PC-9 (cell line): ENCODE measurements at regions of chr5 and their contacts with region 1.

Region 1: GRCh38 chr5:39100851-39101396 is 26.7 kb upstream of the RICTOR start:
- DNase-seq: peak; percentile 96 to 100
- H3K4me3 ChIP-seq: peak overlapping the region; percentile 41; the same call in 1 of the 2 replicates
- H3K27ac ChIP-seq: peak overlapping the region; percentile 98
- H3K4me1 ChIP-seq: peaks cover 60% of the 10 kb centered on the region
- H3K27me3 ChIP-seq: no peaks in the 10 kb centered on the region
- CTCF ChIP-seq: no peak

Region 2: DNA sequence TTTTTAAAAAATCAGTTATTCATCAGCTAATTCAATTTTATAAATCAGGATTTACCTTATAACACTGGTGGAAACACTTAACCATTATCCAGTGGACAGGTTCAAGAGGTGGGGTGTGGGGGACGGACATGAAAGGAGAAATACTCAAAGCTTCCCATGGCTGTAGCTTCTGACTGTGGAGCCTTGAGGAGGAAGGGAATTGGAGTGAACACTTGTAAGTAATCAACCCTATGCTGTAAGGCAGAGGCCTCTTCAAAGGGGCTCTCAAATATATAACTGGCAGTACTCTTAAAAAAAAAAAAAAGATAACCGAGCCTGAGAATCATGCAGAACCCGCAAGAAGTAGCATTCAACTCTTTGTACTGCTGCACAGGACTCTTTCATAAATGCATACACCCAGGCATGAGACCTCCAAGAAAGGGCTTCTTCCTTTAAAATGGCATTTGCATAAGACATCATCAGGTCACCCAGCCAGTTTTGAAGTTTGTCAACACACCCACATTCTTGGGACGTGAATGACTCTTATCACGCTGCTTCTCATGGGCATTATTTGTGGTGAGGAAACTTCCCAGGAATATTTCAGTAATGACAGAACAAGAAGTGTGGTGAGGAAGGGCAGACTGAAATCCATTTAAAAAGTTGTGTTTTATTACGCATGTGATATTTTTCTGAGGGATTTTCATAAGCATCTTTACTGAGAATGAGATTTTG is 247.0 kb before region 1 on chr5:
- CTCF ChIA-PET with region 1: no interaction called
- POLR2A ChIA-PET with region 1: no interaction called
- intact Hi-C with region 1: loop called (anchors 2 kb)
- DNase-seq: peak; percentile 84 to 100
- H3K4me3 ChIP-seq: peak overlapping the region; percentile 17; the same call in 1 of the 2 replicates
- H3K27ac ChIP-seq: peak overlapping the region; percentile 95
- H3K4me1 ChIP-seq: peaks cover 40% of the 10 kb centered on the region
- H3K27me3 ChIP-seq: no peaks in the 10 kb centered on the region
- CTCF ChIP-seq: no peak

Region 3: DNA sequence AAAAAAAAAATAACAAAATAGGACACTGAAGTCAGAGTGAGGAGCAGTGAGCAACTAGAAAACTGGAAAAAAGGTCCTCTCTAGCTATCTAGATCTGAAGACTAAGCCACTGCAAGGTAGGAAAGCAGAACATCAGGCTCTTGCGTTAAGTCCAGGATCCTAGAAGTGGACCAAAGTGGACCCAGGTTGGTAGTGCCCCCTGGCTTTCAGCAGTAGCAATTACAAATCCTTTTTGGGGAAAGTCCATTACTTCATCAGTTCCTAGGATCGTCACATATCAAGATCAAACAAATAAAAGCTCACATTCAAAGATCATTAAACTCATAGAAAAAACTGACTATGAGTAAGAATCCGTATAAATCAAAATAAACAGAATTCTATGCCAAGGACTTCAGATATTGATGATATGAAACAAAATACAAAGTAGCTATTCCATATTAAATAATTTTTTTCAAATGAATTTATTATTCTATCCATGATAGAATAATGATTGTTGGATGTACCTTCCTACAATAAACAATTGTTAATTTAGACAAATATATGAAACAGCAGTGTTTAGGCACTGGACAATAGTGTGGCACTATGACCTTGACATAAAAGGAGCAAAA is 20.2 kb before region 1 on chr5:
- CTCF ChIA-PET with region 1: interaction called, 18 read pairs
- POLR2A ChIA-PET with region 1: no interaction called
- intact Hi-C with region 1: loop called (anchors 1 kb)
- DNase-seq: no peak
- H3K4me3 ChIP-seq: no peak overlapping the region
- H3K27ac ChIP-seq: no peak overlapping the region
- H3K4me1 ChIP-seq: peaks cover 21% of the 10 kb centered on the region
- H3K27me3 ChIP-seq: no peaks in the 10 kb centered on the region
- CTCF ChIP-seq: peak; percentile 76

Region 4: DNA sequence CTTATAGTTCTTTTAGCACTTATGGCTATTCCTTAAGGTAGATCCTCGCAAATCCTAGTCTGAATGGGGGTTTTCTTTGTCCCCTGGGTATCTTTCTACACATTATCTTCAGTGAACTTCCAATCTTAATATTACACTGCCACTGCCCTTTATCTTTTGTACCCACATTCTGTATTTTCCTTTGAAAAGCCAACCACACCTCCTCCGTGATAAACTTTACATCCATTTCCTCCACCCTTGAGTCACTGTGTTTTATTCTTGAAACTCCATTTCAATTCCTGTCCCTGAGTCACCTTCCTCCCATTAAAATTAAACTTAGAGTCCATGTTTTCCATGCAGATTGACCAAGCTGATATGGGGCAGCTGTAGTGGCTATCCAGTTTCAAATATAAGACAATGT is 16.5 kb after region 1 on chr5:
- CTCF ChIA-PET with region 1: no interaction called
- POLR2A ChIA-PET with region 1: no interaction called
- intact Hi-C with region 1: no loop called
- DNase-seq: no peak
- H3K4me3 ChIP-seq: no peak overlapping the region
- H3K27ac ChIP-seq: no peak overlapping the region
- H3K4me1 ChIP-seq: 0 out of 2 replicates have a peak, but pooled peaks cover 16% of the 10 kb centered on the region
- H3K27me3 ChIP-seq: no peaks in the 10 kb centered on the region
- CTCF ChIP-seq: no peak

Region 5: GRCh38 chr5:39138892-39139291 is 38.0 kb after region 1 on chr5:
- CTCF ChIA-PET with region 1: no interaction called
- POLR2A ChIA-PET with region 1: no interaction called
- intact Hi-C with region 1: loop called (anchors 1 kb)
- DNase-seq: peak in 1 of 2 experiments; percentile 98
- H3K4me3 ChIP-seq: 0 out of 2 replicates have a peak overlapping the region, but pooled peaks have one; percentile 9
- H3K27ac ChIP-seq: peak overlapping the region; percentile 89
- H3K4me1 ChIP-seq: peaks cover 21% of the 10 kb centered on the region
- H3K27me3 ChIP-seq: no peaks in the 10 kb centered on the region
- CTCF ChIP-seq: no peak

Region 6: GRCh38 chr5:39194466-39195136 is 93.7 kb after region 1 on chr5:
- CTCF ChIA-PET with region 1: no interaction called
- POLR2A ChIA-PET with region 1: interaction called, 3 read pairs
- intact Hi-C with region 1: loop called (anchors 2 kb)
- DNase-seq: peak; percentile 78 to 93
- H3K4me3 ChIP-seq: peak overlapping the region; percentile 13; the same call in 1 of the 2 replicates
- H3K27ac ChIP-seq: peak overlapping the region; percentile 91
- H3K4me1 ChIP-seq: peaks cover 56% of the 10 kb centered on the region
- H3K27me3 ChIP-seq: no peaks in the 10 kb centered on the region
- CTCF ChIP-seq: no peak

Region 7: GRCh38 chr5:39376293-39376714 is 275.4 kb after region 1 on chr5:
- CTCF ChIA-PET with region 1: interaction called, 22 read pairs
- POLR2A ChIA-PET with region 1: no interaction called
- intact Hi-C with region 1: no loop called
- DNase-seq: peak; percentile 63 to 66
- H3K4me3 ChIP-seq: no peak overlapping the region
- H3K27ac ChIP-seq: no peak overlapping the region
- H3K4me1 ChIP-seq: no peaks in the 10 kb centered on the region
- H3K27me3 ChIP-seq: no peaks in the 10 kb centered on the region
- CTCF ChIP-seq: peak; percentile 96

Region 8: GRCh38 chr5:39750661-39751060 is 649.7 kb after region 1 on chr5:
- CTCF ChIA-PET with region 1: no interaction called
- POLR2A ChIA-PET with region 1: no interaction called
- intact Hi-C with region 1: no loop called
- DNase-seq: no peak
- H3K4me3 ChIP-seq: no peak overlapping the region
- H3K27ac ChIP-seq: no peak overlapping the region
- H3K4me1 ChIP-seq: peaks cover 4% of the 10 kb centered on the region; the same call in 1 of the 2 replicates
- H3K27me3 ChIP-seq: no peaks in the 10 kb centered on the region
- CTCF ChIP-seq: no peak